Dendritic cell treated with granulocyte-macrophage colony-stimulating factor and Interleukin-4, amounts not matched to agents 40 ng/mL and 50 ng/mL, for 4 days (primary cell): ENCODE measurements at regions of chr4 and their contacts with region 1.

Region 1: GRCh38 chr4:167222099-167222498 is 12.2 kb downstream of the SPOCK3 start:
- H3K4me3 Mint-ChIP-seq: no peak overlapping the region
- H3K27ac Mint-ChIP-seq: peak overlapping the region; percentile 27
- H3K4me1 Mint-ChIP-seq: no peaks in the 10 kb centered on the region
- H3K27me3 Mint-ChIP-seq: no peaks in the 10 kb centered on the region

Region 2: GRCh38 chr4:167210166-167210565 is 11.9 kb before region 1 on chr4:
- intact Hi-C with region 1: no loop called
- H3K4me3 Mint-ChIP-seq: no peak overlapping the region
- H3K27ac Mint-ChIP-seq: no peak overlapping the region
- H3K4me1 Mint-ChIP-seq: no peaks in the 10 kb centered on the region
- H3K27me3 Mint-ChIP-seq: no peaks in the 10 kb centered on the region

Region 3: DNA sequence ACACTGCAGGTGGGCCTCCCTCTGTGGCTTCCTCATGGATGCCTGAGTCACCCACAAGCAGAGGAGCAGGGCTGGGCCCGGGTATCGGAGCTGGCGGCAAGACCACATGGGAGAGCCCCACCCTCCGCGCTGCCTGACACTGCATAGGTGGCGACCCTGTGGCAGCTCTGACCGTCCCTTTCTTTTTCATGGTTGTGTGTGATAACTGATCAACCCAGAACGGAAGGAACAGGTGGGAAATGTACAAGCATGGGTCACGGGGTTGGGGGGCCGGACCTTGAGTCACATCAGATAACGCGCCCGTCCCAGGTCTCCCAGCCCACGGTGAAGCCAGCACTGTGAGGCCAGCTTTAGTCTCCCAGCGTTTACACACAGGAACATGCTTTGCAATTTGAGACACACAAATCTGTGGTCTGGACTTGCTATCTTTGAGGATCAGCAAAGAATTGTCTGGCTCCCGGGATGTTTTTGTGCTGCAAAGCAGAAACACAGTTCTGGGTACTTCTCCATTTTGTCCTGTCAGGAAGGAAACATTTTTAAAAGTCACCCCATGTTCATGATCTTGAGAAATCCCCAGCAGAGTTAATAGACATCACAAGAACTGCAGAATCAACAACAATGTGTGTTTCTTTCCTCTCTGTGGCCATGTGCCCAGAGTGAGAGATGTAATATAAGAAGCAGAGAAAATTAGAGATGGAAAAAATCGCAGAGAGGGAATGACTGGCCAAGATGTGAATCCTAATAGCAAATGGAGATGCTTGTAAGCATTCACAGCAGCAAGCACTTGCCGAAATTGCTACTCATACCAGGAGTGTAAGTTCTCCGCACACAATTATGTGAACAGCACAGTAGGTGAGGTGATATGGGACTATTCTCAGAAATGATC is 1858.1 kb after region 1 on chr4:
- intact Hi-C with region 1: loop called (anchors 10 kb)
- H3K4me3 Mint-ChIP-seq: peak overlapping the region; percentile 64
- H3K27ac Mint-ChIP-seq: peak overlapping the region; percentile 90
- H3K4me1 Mint-ChIP-seq: peaks cover 33% of the 10 kb centered on the region
- H3K27me3 Mint-ChIP-seq: no peaks in the 10 kb centered on the region